ENCODE measurements at regions of chr16 and their contacts with region 1.

Region 1: DNA sequence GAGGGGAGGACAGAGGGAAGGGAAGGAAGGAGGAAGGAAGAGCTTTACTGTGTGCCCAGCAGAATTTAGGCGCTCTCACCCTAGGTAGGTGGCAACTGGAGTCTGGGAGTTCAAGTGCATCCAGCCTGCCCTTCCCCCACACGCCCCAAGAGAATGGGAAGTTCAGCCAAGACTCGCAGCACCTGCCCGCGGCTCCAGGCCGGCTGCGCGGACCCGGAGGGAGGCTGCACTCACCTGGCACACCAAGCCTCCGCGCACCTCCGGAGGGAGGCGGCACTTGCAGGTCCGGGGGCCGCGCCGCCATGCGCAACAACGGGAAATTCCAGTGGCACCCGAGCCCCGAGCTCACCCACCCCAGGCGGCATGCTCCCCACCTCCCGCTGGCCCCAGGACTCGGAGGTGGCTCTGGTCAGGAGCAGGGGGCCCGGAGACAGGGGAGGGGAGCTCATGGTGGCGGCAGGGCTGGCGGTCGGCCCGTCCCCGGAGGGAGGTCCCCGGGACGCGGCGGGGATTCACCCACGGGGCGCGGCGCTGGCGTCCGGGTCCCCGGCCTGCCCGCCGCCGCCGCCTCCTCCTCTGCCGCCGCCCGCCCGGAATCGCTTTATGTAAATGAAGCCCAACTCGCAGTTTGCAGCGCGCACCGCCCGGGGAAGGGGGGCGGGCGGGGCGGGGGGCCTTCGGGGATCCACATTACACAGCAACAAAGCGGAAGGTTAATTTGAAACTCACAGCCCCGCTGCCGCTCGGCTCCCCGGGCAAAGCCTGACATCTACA is at the start of gene ZFHX3:
- DNase-seq: peak in 4 of 10 donors; percentile 27 to 64 (median 52)
- H3K4me3 ChIP-seq: peak within 1 kb of the TSS; percentile 51 to 86 (median 71)
- H3K27ac ChIP-seq: peak within 1 kb of the TSS; percentile 27 to 96 (median 83)
- H3K27me3 ChIP-seq: peaks cover 0 to 7% (median 0%) of the 10 kb centered on the region in 45 donors
- CTCF ChIP-seq: peak in 33 of 56 donors; percentile 8 to 63 (median 29)
- total RNA-seq, gene ZFHX3: 7.3 to 24.4 (median 13.4) TPM

Region 2: DNA sequence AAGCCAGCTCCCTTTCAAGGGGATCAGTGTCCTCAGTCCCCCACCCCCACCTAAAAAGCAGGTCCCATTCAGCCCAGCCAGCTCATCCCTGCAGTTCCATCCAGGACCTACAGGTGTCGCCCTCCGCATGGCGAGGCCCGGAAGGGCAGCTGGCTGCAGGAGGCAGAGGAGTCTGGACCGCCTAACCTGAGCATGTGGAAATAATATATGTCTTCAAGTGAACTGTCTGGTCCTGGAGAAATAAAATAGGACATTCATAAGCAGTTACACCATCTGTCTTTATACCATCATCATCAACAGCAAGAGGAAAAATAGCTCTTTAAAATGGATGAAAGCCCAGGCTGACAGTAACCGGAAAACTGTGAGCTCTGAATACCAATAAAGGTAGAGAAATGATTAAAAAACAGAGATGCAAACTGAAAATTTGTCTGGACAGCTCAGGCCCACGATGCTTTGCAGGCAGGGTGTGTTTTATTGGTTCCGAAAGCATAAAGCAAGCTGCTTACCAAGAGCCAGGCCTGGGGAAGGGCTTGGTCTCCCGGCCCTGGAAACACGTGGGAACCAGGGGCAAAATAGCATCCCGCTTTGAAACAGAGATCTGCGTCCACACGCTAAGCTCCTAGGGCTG is 215.0 kb before region 1 on chr16:
- intact Hi-C with region 1: loop called (anchors 5 to 10 kb)
- DNase-seq: peak; percentile 63 to 87 (median 74)
- H3K4me3 ChIP-seq: no peak overlapping the region
- H3K27ac ChIP-seq: peak overlapping the region in 12 of 59 donors; percentile 3 to 61 (median 26)
- H3K27me3 ChIP-seq: no peaks in the 10 kb centered on the region
- CTCF ChIP-seq: peak; percentile 74 to 98 (median 93)

Region 3: GRCh38 chr16:72927199-72928089 is 120.3 kb before region 1 on chr16:
- intact Hi-C with region 1: no loop called
- DNase-seq: no peak
- H3K4me3 ChIP-seq: peak overlapping the region in 6 of 59 donors; percentile 0 to 26 (median 2)
- H3K27ac ChIP-seq: peak overlapping the region in 4 of 59 donors; percentile 7 to 44 (median 26)
- H3K27me3 ChIP-seq: peaks cover 0 to 16% (median 0%) of the 10 kb centered on the region in 45 donors
- CTCF ChIP-seq: no peak

Region 4: GRCh38 chr16:72938795-72939164 is 108.9 kb before region 1 on chr16:
- intact Hi-C with region 1: loop called in 1 of 2 experiments (anchors 5 kb)
- DNase-seq: peak in 3 of 10 donors; percentile 41 to 61 (median 49)
- H3K4me3 ChIP-seq: peak overlapping the region in 11 of 59 donors; percentile 3 to 36 (median 16)
- H3K27ac ChIP-seq: peak overlapping the region in 28 of 59 donors; percentile 1 to 82 (median 42)
- H3K27me3 ChIP-seq: no peaks in the 10 kb centered on the region
- CTCF ChIP-seq: no peak

Region 5: DNA sequence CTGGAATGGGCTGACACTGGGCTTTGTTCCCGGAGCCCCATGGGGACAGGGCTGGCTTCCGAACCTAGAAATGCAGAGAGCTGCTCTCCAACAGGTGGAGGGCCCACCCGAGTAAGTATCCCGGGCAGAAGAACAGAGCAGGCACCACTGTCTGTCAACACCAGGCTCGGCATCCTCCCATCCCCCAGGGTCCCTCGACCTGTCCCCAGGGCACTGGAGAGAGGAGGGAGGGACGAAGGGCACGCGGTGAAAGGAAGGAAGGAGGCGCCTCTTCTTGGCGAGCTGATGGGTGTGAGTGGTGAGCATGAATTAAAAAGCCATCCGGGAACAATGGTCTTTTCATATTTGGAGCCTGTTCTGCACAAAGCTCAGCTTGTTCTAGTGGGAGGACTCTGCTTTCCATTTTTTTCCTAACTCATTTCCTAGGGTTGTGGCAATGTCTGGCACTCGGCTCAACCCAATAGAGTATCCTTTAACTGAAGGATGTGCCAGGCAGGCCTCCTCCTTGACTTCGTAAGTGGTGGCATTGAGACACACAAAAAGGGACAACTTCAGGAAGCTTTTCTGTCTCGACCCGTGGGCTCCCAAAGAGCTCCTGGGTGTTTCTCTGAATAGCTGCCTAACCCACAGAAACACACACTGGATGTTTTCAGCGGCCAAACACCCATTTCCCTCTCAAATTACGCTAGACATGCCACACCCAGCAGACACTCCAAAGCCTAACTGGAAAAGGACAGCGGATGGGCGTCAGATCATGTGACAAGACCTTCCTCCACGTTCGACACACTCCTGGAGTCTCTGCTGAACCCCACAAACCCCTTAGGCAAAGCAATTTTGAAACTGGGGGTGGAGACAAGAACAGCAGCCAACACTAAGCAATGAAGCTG is 47.4 kb before region 1 on chr16:
- intact Hi-C with region 1: loop called in 1 of 2 experiments (anchors 5 kb)
- DNase-seq: peak in 8 of 10 donors; percentile 9 to 58 (median 48)
- H3K4me3 ChIP-seq: peak overlapping the region in 51 of 59 donors; percentile 4 to 65 (median 32)
- H3K27ac ChIP-seq: peak overlapping the region in 44 of 59 donors; percentile 1 to 75 (median 38)
- H3K27me3 ChIP-seq: no peaks in the 10 kb centered on the region
- CTCF ChIP-seq: peak in 28 of 56 donors; percentile 4 to 55 (median 24)